Breast epithelium (tissue), 4 donors: ENCODE measurements at regions of chr16 and their contacts with region 1.

Region 1: GRCh38 chr16:13099822-13100221 is 198.4 kb downstream of the SHISA9 start:
- DNase-seq: no peak
- H3K4me3 ChIP-seq: no peak overlapping the region
- H3K27ac ChIP-seq: no peak overlapping the region
- H3K4me1 ChIP-seq: no peaks in the 10 kb centered on the region
- H3K27me3 ChIP-seq: no peaks in the 10 kb centered on the region
- CTCF ChIP-seq: no peak
- POLR2A ChIP-seq: no peak

Region 2: GRCh38 chr16:13041646-13042290 is 58.1 kb before region 1 on chr16:
- intact Hi-C with region 1: no loop called
- DNase-seq: no peak
- H3K4me3 ChIP-seq: no peak overlapping the region
- H3K27ac ChIP-seq: no peak overlapping the region
- H3K4me1 ChIP-seq: no peaks in the 10 kb centered on the region
- H3K27me3 ChIP-seq: no peaks in the 10 kb centered on the region
- CTCF ChIP-seq: no peak
- POLR2A ChIP-seq: no peak

Region 3: DNA sequence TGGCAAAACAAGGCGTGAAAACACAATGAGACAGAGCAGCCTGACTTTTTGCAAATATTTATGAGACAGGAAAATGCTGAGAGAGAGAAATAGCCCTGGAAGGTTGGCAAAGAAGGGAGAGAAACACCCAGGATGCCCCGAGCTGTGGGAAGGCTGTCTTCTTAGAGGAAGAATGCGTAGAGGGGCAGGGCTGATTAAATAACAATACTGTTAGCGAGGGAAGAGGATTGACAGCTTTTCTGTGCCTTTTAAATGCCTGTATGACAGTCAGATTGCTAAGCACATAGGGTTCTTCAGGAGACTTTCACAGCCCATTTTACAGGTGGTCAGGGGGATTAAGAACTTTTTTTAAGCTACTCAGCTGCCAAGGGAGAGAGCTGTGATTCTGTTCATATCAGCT is 20.7 kb after region 1 on chr16:
- intact Hi-C with region 1: no loop called
- DNase-seq: no peak
- H3K4me3 ChIP-seq: no peak overlapping the region
- H3K27ac ChIP-seq: no peak overlapping the region
- H3K4me1 ChIP-seq: no peaks in the 10 kb centered on the region
- H3K27me3 ChIP-seq: no peaks in the 10 kb centered on the region
- CTCF ChIP-seq: no peak
- POLR2A ChIP-seq: no peak

Region 4: DNA sequence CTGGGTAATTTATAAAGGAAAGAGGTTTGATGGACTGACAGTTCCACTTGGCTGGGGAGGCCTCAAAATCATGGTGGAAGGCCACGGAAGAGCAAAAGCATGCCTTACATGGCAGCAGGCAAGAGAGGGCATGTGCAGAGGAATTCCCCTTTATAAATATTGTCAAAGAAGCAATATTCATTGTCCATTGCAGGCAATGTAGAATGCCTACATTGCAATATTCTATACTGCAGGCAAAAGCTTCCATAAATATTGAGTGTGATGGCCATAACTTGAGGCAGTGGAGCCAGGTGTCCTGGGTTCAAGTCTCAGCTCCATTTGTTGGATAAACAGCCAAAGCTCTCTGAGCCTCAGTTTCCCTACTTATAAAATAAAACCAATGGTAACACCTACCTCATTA is 123.8 kb after region 1 on chr16:
- intact Hi-C with region 1: no loop called
- DNase-seq: no peak
- H3K4me3 ChIP-seq: no peak overlapping the region
- H3K27ac ChIP-seq: no peak overlapping the region
- H3K4me1 ChIP-seq: no peaks in the 10 kb centered on the region
- H3K27me3 ChIP-seq: no peaks in the 10 kb centered on the region
- CTCF ChIP-seq: no peak
- POLR2A ChIP-seq: no peak

Region 5: GRCh38 chr16:13839577-13839976 is 739.8 kb after region 1 on chr16:
- intact Hi-C with region 1: loop called (anchors 5 kb)
- DNase-seq: no peak
- H3K4me3 ChIP-seq: no peak overlapping the region
- H3K27ac ChIP-seq: no peak overlapping the region
- H3K4me1 ChIP-seq: no peaks in the 10 kb centered on the region
- H3K27me3 ChIP-seq: peaks cover 0 to 8% of the 10 kb centered on the region in 2 donors
- CTCF ChIP-seq: no peak
- POLR2A ChIP-seq: no peak